Activated T-helper 2 cell treated with anti-CD3 and anti-CD28 coated beads, Interferon-gamma antibody, Interleukin-2, Interleukin-4, amounts not matched to agents 10 μg/mL and 5 μg/mL and 100 μg/mL, durations not matched to agents 14 hours and 24 hours and 36 hours (primary cell): ENCODE measurements at regions of chr6 and their contacts with region 1.

Region 1: DNA sequence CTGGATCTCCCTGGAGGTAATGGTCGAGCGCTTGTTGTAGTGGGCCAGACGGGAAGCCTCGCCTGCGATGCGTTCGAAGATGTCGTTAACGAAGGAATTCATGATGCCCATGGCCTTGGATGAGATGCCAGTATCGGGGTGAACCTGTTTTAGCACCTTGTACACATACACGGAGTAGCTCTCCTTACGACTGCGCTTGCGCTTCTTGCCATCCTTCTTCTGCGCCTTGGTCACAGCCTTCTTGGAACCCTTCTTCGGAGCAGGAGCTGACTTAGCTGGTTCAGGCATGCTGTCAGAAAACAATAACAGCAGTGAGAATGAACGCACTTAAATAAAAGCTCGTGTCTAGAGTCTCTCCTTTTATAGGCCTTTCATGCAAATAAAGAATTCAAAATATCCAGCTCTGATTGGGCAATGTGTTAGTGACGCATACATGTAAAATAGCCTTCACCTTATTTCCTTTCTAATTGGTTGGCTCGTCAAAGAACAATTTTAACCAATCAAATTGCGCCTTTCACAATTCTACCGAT is 129.2 kb downstream of the HFE start:
- DNase-seq: peak; percentile 87
- H3K4me3 Mint-ChIP-seq: no peak overlapping the region
- H3K27ac Mint-ChIP-seq: no peak overlapping the region
- H3K4me1 Mint-ChIP-seq: peaks cover 24% of the 10 kb centered on the region
- H3K27me3 Mint-ChIP-seq: no peaks in the 10 kb centered on the region

Region 2: GRCh38 chr6:26175428-26176181 is 40.8 kb before region 1 on chr6:
- intact Hi-C with region 1: loop called (anchors 2 kb)
- DNase-seq: peak; percentile 52
- H3K4me3 Mint-ChIP-seq: peak overlapping the region; percentile 56
- H3K27ac Mint-ChIP-seq: peak overlapping the region; percentile 63
- H3K4me1 Mint-ChIP-seq: peaks cover 45% of the 10 kb centered on the region
- H3K27me3 Mint-ChIP-seq: no peaks in the 10 kb centered on the region

Region 3: GRCh38 chr6:26183581-26184366 is 32.6 kb before region 1 on chr6:
- intact Hi-C with region 1: loop called (anchors 2 kb)
- DNase-seq: peak; percentile 78
- H3K4me3 Mint-ChIP-seq: peak overlapping the region; percentile 88
- H3K27ac Mint-ChIP-seq: peak overlapping the region; percentile 96
- H3K4me1 Mint-ChIP-seq: peaks cover 69% of the 10 kb centered on the region
- H3K27me3 Mint-ChIP-seq: no peaks in the 10 kb centered on the region

Region 4: GRCh38 chr6:26204332-26205165 is 11.9 kb before region 1 on chr6:
- intact Hi-C with region 1: loop called (anchors 1 kb)
- DNase-seq: peak; percentile 86
- H3K4me3 Mint-ChIP-seq: no peak overlapping the region
- H3K27ac Mint-ChIP-seq: no peak overlapping the region
- H3K4me1 Mint-ChIP-seq: peaks cover 36% of the 10 kb centered on the region
- H3K27me3 Mint-ChIP-seq: no peaks in the 10 kb centered on the region

Region 5: DNA sequence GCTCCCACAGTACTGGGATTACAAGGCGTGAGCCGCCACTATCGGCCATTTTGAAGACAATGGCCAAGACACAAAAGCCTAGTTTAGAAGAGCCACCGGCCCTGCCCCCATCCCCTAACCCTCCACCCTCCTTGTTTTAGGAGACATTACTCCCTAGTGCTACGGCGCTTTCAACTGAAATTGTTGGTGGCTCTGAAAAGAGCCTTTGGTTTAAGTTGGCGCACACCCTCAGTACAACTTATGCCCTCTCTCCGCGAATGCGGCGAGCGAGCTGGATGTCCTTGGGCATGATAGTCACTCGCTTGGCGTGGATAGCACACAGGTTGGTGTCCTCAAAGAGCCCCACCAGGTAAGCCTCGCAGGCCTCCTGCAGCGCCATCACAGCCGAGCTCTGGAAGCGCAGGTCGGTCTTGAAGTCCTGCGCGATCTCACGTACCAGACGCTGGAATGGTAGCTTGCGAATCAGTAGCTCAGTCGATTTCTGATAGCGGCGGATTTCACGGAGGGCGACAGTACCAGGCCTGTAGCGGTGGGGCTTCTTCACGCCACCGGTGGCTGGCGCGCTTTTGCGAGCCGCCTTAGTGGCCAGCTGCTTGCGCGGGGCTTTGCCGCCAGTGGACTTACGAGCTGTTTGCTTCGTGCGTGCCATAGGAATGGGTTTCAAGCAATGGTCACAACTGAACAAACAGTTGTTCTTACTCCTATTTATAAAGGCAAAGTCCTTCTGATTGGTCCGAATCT is 33.7 kb after region 1 on chr6:
- intact Hi-C with region 1: loop called (anchors 1 kb)
- DNase-seq: peak; percentile 74
- H3K4me3 Mint-ChIP-seq: peak overlapping the region; percentile 92
- H3K27ac Mint-ChIP-seq: peak overlapping the region; percentile 98
- H3K4me1 Mint-ChIP-seq: peaks cover 46% of the 10 kb centered on the region
- H3K27me3 Mint-ChIP-seq: no peaks in the 10 kb centered on the region